ENCODE measurements at regions of chr9 and their contacts with region 1.

Region 1: DNA sequence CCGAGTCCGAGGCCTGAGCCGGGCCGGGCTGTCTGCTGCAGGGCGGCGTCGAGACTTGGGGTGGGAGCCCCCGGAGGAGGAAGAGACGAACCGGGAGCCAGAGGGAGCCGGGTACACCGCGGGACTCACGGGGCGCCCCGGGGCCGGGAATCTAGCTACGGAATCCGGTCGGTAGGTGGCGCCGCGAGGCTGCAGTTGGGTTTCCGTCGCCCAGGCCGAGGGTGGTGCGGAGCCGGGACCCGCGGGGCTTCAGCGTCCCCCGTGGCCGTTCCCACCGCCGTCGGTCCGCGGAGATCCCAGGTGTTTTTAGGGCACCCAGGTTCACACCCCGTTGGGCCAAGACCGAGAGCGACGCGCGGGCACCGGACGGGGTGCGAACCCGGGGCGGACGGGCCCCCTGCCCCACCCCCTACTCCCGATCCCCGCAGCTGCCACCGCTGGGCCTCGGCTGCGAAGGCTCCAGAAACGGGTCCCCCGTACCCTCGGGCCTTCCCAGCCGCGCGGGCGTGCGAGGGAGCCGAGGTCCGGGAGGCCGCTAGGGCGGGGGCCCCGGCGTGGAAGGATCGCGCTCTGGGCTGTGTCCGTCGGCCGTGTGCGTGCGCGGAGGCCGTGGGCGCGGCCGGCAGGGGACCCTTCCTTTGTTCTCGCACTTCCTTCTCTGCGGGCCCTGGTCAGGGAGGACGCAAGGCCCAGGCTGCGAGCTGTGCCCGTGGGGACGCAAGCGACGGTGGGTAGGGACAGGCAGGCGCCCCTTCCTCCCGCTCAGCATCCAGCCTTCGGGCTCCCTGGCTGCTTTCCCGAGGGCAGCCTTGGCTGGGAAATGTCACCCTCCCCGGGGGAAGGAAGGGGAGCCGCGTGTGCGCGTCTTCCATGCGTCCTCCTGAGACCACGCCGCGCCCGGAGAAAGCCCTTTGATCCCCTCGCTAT is 146.6 kb downstream of the GAPVD1 start:
- DNase-seq: no peak
- ATAC-seq: peak; percentile 93
- H3K4me3 ChIP-seq: peak overlapping the region; percentile 70; the same call in 1 of the 2 replicates
- H3K27ac ChIP-seq: no peak overlapping the region
- H3K4me1 ChIP-seq: peaks cover 10% of the 10 kb centered on the region
- H3K27me3 ChIP-seq: no peaks in the 10 kb centered on the region
- CTCF ChIP-seq: peak; percentile 75 to 95 (median 87); a peak in 5 of 6 replicates
- EP300 ChIP-seq: no peak
- POLR2A ChIP-seq: peak; percentile 27; the same call in 1 of the 2 replicates
- RAD21 ChIP-seq: peak; percentile 87

Region 2: DNA sequence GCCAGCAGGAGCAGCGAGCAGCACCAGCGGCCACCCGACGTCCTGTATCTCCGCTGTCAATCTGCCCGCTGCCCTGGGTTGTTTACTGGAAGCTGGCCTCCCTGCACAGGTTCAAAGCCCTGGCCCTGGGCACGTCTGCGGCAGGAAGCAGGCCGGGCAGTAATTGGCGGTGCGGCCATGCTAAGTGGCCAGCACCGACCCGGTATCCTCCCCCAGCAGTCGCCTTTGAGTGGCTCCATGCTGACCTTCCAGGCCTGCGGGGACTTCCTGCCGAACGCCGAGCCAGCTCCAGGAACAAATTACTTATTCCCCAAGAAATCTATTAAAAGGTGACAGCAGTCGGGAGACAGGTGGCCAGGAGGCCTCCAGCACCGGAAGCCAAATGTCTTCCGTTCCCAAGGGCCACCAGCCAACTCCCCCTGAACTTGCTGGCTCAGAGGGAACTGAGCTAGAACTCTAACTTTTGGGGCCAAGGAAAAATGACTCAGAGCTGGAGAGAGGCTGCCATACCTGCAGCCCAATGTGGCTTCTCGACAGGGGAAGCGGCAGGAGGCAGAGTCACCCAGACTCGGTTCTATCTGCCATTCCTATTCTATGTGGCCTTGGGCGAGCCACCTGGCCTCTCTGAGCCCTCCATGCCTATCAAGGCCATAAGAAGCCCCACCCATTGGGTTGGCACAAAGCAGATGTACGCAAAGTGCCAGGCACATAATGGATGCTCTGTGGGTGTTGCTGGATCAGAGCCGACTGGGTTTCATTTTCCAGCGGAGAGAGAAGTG is 979.3 kb before region 1 on chr9:
- CTCF ChIA-PET with region 1: no interaction called
- POLR2A ChIA-PET with region 1: no interaction called
- RAD21 ChIA-PET with region 1: no interaction called
- SMC1A ChIA-PET with region 1: no interaction called
- in situ Hi-C with region 1: no loop called
- intact Hi-C with region 1: no loop called
- DNase-seq: no peak
- ATAC-seq: no peak
- H3K4me3 ChIP-seq: no peak overlapping the region
- H3K27ac ChIP-seq: no peak overlapping the region
- H3K4me1 ChIP-seq: no peaks in the 10 kb centered on the region
- H3K27me3 ChIP-seq: no peaks in the 10 kb centered on the region
- CTCF ChIP-seq: no peak
- EP300 ChIP-seq: no peak
- POLR2A ChIP-seq: no peak
- RAD21 ChIP-seq: no peak

Region 3: GRCh38 chr9:126228781-126229444 is 820.7 kb after region 1 on chr9:
- CTCF ChIA-PET with region 1: interaction called, 6 read pairs
- POLR2A ChIA-PET with region 1: no interaction called
- RAD21 ChIA-PET with region 1: interaction called, 3 read pairs
- SMC1A ChIA-PET with region 1: interaction called, 5 read pairs
- in situ Hi-C with region 1: loop called (anchors 5 kb)
- intact Hi-C with region 1: loop called (anchors 1 kb)
- DNase-seq: no peak
- ATAC-seq: peak; percentile 97
- H3K4me3 ChIP-seq: no peak overlapping the region
- H3K27ac ChIP-seq: no peak overlapping the region
- H3K4me1 ChIP-seq: no peaks in the 10 kb centered on the region
- H3K27me3 ChIP-seq: peaks cover 0 to 2% of the 10 kb centered on the region in 2 experiments; a peak in 1 of 4 replicates
- CTCF ChIP-seq: peak; percentile 92 to 95 (median 94)
- EP300 ChIP-seq: no peak
- POLR2A ChIP-seq: no peak
- RAD21 ChIP-seq: peak; percentile 87

Region 4: DNA sequence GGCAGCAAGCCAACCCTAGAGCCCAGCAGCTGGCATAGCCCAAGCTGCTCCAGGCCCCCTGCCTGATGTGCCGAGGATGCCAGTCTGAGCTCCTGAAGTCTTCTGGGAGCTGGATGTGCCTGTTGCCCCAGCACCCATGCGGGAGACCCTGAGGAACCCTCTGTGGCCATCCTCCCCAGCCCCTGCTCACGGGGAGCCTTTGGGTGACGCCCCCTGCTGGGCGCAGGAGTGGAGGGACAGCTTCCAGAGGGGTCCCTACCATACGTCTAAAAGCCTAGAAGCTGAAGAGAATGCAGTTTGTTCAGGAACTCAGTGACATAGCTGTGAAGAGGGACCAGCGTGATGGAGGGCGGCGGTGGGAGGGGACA is 885.3 kb after region 1 on chr9:
- CTCF ChIA-PET with region 1: interaction called, 11 read pairs
- POLR2A ChIA-PET with region 1: no interaction called
- RAD21 ChIA-PET with region 1: interaction called, 5 read pairs
- SMC1A ChIA-PET with region 1: no interaction called
- in situ Hi-C with region 1: no loop called
- intact Hi-C with region 1: no loop called
- DNase-seq: no peak
- ATAC-seq: no peak
- H3K4me3 ChIP-seq: no peak overlapping the region
- H3K27ac ChIP-seq: no peak overlapping the region
- H3K4me1 ChIP-seq: no peaks in the 10 kb centered on the region
- H3K27me3 ChIP-seq: no peaks in the 10 kb centered on the region; a peak in 1 of 4 replicates
- CTCF ChIP-seq: peak in 2 of 3 experiments; percentile 5 to 28; a peak in 2 of 6 replicates
- EP300 ChIP-seq: no peak
- POLR2A ChIP-seq: no peak
- RAD21 ChIP-seq: no peak

Region 5: GRCh38 chr9:126471084-126471624 is 1062.9 kb after region 1 on chr9:
- CTCF ChIA-PET with region 1: no interaction called
- POLR2A ChIA-PET with region 1: no interaction called
- RAD21 ChIA-PET with region 1: no interaction called
- SMC1A ChIA-PET with region 1: interaction called, 4 read pairs
- in situ Hi-C with region 1: loop called (anchors 5 kb)
- intact Hi-C with region 1: no loop called
- DNase-seq: peak; percentile 52
- ATAC-seq: peak; percentile 94
- H3K4me3 ChIP-seq: peak overlapping the region; percentile 2; the same call in 1 of the 2 replicates
- H3K27ac ChIP-seq: no peak overlapping the region
- H3K4me1 ChIP-seq: peaks cover 15% of the 10 kb centered on the region
- H3K27me3 ChIP-seq: peaks cover under 1 to 4% of the 10 kb centered on the region in 2 experiments; a peak in 3 of 4 replicates
- CTCF ChIP-seq: no peak
- EP300 ChIP-seq: 0 out of 4 replicates have a peak, but pooled peaks of 1 of the 2 experiments have one; percentile 14
- POLR2A ChIP-seq: no peak
- RAD21 ChIP-seq: no peak

Measured in GM12878 (cell line).